Right ventricle myocardium superior (tissue), 1 donor: ENCODE measurements at regions of chr10 and their contacts with region 1.

Region 1: DNA sequence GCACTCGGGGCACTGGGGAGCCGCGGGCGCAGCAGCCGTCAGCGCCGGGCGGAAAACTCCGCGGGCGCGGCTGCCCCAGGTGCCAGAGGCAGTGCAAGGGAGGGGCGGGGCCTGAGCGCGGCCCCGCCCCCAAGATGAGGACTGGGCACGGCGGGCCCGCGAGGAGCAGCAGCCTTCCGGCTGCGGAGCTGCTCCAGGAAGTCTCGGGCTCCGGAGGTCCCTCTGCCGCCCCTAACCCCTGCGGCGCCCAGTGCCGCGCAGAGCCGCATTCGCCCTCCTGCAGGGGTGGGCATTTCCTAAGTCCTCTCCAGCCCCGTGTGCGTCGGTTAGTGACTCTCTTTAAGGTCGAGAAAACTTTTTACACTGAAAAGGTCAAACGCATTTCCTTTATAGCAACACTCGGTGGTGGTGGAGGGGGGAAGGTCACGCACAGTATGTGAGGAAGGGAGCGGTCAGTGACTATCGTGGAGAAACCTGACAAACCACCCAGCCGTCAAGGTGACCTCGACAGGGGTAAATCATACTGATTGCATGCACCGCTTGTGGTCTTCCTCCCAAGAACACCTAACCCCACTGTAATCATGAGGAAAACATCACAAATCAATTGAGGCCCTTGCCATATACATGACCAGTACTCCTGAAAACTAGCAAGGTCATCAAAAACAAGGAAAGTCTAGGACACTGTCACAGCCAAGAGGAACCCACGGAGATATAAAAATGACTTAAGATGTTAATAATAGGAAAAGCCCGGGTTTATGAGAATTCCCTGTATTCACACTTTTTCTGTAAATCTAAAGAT is at the start of gene ANXA11:
- DNase-seq: peak; percentile 92
- ATAC-seq: peak; percentile 82
- total RNA-seq, gene ANXA11: 434 TPM

Region 2: DNA sequence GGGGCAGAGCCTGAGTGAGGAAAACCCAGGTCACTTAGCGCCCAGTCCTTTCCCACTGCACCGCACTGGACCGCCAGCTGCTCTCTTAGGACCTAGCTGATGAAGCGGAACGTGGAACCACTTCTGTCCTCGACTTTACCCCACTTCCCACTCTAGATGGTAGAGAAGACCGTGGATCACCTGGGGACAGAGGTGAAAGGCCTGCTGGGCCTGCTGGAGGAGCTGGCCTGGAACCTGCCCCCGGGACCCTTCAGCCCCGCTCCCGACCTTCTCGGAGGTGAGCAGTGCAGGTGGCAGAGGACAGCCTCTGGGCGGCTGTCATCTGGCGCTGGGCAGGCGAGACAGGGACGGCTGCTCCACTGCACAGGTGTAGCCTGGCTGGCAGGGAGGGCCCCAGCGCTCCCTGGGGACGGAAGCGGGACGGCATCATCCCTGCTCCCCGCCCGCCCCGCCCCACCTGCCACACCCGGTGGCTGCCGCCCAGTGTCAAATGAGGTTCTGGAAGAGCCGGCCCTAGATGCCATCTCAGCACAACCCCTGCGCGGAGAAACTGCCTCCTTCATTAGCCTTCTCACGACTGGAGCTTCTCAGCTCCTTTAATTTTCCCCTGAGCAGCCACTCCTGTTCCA is 61.5 kb before region 1 on chr10:
- intact Hi-C with region 1: loop called (anchors 5 kb)
- DNase-seq: no peak
- ATAC-seq: peak; percentile 47

Region 3: DNA sequence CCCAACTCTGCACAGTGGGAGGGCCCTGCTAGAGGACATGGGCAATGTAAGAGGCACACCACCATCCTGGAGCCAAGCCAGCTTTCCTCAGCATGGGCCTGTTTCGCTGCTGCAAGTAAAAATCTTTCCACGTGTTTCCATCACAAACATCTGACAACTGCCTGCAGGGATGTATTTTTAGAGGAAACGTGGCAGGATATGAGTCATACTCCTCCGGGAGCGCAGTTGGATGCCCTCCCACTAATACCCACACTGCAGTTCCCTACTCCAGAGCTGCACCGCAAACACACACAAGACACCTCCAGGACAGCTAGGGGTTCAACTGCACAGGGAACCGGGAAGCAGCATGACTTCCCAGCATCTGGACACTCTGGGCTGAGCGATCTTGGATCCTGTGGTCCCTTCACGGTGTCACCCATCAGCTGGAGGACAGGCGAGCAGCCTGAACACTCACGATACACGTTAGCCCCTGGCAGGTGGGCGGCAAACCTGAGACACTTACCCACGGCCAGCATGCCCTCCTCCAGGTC is 47.0 kb before region 1 on chr10:
- intact Hi-C with region 1: loop called (anchors 2 kb)
- DNase-seq: peak; percentile 92
- ATAC-seq: peak; percentile 95